ENCODE measurements at regions of chr15 and their contacts with region 1.

Region 1: GRCh38 chr15:53665917-53666316 is 93.5 kb downstream of the WDR72 start:
- DNase-seq: no peak
- H3K4me3 ChIP-seq: no peak overlapping the region
- H3K27ac ChIP-seq: no peak overlapping the region
- H3K4me1 ChIP-seq: no peaks in the 10 kb centered on the region
- CTCF ChIP-seq: peak; percentile 24; the same call in 1 of the 2 replicates

Region 2: DNA sequence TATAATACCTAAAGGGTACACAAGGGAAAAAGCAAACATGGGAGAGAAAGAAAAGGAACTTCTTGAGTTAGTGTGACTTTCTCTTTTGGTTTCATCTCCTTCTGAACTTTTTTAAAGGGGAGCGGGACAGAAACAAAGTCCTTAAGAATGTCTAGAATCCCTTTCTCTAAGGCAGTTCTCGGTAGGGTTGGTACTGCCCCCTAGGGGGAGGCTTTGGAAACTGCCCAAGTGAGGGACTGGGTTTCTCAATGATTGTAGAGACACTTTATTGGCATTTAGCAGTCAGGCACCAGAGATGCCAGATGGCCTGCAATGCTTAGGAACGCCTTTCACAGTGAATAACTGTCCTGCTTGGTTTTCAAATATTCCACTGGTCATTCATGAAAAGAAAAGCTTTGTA is 79.1 kb before region 1 on chr15:
- CTCF ChIA-PET with region 1: no interaction called
- POLR2A ChIA-PET with region 1: no interaction called
- intact Hi-C with region 1: no loop called
- DNase-seq: peak; percentile 11
- H3K4me3 ChIP-seq: no peak overlapping the region
- H3K27ac ChIP-seq: no peak overlapping the region
- H3K4me1 ChIP-seq: no peaks in the 10 kb centered on the region
- CTCF ChIP-seq: peak; percentile 81

Region 3: GRCh38 chr15:53747501-53748068 is 81.7 kb after region 1 on chr15:
- CTCF ChIA-PET with region 1: no interaction called
- POLR2A ChIA-PET with region 1: interaction called, 10 read pairs
- intact Hi-C with region 1: no loop called
- DNase-seq: no peak
- H3K4me3 ChIP-seq: no peak overlapping the region
- H3K27ac ChIP-seq: no peak overlapping the region
- H3K4me1 ChIP-seq: no peaks in the 10 kb centered on the region
- CTCF ChIP-seq: no peak

Region 4: DNA sequence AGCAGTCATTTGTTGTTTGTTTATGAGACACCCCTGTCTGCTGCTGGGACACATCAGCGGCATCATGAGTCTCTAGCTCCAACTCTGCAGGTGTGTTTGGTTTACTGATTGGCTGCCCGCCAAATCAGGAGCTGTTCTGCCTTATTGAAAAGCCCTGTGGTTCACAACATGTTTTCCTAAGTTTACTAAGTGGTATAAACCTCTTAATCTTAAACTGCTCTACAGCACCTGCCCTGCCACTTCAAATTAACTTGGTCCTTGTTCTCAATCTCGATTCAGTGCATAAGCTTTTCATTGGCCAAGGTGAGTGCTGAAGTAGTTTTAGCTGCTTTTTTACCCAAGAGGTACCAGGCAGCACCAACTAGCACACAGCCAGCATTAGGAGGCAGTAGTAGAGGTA is 171.3 kb after region 1 on chr15:
- CTCF ChIA-PET with region 1: no interaction called
- POLR2A ChIA-PET with region 1: no interaction called
- intact Hi-C with region 1: no loop called
- DNase-seq: no peak
- H3K4me3 ChIP-seq: no peak overlapping the region
- H3K27ac ChIP-seq: no peak overlapping the region
- H3K4me1 ChIP-seq: no peaks in the 10 kb centered on the region
- CTCF ChIP-seq: no peak

Measured in OCI-LY7 (cell line).